SK-N-SH (cell line): ENCODE measurements at regions of chr20 and their contacts with region 1.

Region 1: DNA sequence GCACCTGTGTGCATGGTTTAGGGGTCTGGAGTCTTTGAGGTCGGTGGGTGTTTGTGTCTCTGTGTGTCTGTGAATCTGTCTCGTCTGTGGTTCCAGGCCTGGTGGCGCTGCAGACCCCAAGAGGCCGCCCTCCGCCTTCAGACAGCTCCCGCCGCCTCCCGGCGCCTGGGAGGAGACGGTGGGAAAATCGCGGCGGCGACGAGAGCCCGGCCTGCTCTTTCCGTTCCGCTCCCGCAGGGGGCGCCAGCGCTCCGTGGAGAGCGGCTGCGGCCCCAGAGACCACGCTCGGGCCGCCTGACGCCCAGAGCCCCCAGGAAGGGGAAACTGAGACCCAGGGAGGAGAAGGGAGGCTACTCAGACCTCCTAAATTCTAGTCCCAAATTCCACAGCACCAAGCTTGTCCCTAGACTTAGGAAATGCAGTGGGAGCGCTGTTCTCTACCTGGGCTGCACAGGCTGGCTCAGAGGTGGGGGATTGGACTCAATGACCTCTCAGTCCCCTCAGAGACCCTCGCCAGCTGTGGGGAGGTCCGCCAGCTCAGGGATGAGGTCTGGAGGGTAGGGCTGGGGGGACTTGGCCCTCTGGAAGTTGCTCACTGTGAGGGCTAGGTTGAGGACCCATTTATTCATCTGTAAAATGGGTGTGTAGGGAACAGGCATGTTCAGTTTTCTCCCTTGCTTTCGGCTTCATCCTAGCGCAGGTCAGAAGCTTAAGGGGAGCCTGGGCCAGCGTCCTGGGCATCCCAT is 36.9 kb upstream of the BLCAP start:
- DNase-seq: peak; percentile 90
- H3K4me3 ChIP-seq: peak overlapping the region in 1 of 2 experiments; percentile 29; a peak in 1 of 4 replicates
- H3K27ac ChIP-seq: no peak overlapping the region
- H3K4me1 ChIP-seq: peaks cover 0 to 3% of the 10 kb centered on the region in 2 experiments; a peak in 1 of 4 replicates
- H3K27me3 ChIP-seq: peaks cover 13% of the 10 kb centered on the region
- CTCF ChIP-seq: peak; percentile 91
- EP300 ChIP-seq: no peak
- RAD21 ChIP-seq: peak; percentile 95

Region 2: DNA sequence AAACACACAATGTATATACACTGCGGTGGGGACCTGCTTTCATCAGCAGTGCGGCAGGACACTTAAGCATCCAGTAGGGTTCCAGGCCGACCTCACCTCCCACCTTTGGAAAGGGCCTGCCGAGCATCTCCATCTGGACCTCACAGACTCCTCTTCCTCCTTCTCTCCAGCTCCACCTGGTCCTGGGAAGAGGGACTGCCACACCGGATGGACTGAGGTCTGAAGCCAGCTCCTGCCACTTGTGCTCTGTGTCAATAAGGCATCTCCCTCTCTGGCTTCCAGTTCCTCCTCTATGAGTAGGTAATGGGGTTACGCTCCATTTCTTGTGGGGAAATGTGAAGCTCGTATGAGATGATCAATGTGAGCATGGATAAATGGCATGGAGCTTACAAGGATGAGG is 62.6 kb before region 1 on chr20:
- CTCF ChIA-PET with region 1: no interaction called
- POLR2A ChIA-PET with region 1: no interaction called
- DNase-seq: no peak
- H3K4me3 ChIP-seq: no peak overlapping the region
- H3K27ac ChIP-seq: no peak overlapping the region
- H3K4me1 ChIP-seq: no peaks in the 10 kb centered on the region
- H3K27me3 ChIP-seq: no peaks in the 10 kb centered on the region
- CTCF ChIP-seq: no peak
- EP300 ChIP-seq: no peak
- RAD21 ChIP-seq: no peak

Region 3: GRCh38 chr20:37590938-37591490 is 26.5 kb after region 1 on chr20:
- CTCF ChIA-PET with region 1: interaction called, 23 read pairs
- POLR2A ChIA-PET with region 1: no interaction called
- DNase-seq: no peak
- H3K4me3 ChIP-seq: no peak overlapping the region
- H3K27ac ChIP-seq: no peak overlapping the region
- H3K4me1 ChIP-seq: peaks cover 0 to 10% of the 10 kb centered on the region in 2 experiments; a peak in 1 of 4 replicates
- H3K27me3 ChIP-seq: peaks cover 5% of the 10 kb centered on the region; the same call in 1 of the 2 replicates
- CTCF ChIP-seq: no peak
- EP300 ChIP-seq: no peak
- RAD21 ChIP-seq: no peak

Region 4: GRCh38 chr20:37651932-37652331 is 87.4 kb after region 1 on chr20:
- CTCF ChIA-PET with region 1: interaction called, 10 read pairs
- POLR2A ChIA-PET with region 1: no interaction called
- DNase-seq: peak; percentile 68
- H3K4me3 ChIP-seq: no peak overlapping the region
- H3K27ac ChIP-seq: no peak overlapping the region
- H3K4me1 ChIP-seq: peaks cover 0 to 5% of the 10 kb centered on the region in 2 experiments; a peak in 1 of 4 replicates
- H3K27me3 ChIP-seq: no peaks in the 10 kb centered on the region; the same call in 1 of the 2 replicates
- CTCF ChIP-seq: peak; percentile 54
- EP300 ChIP-seq: no peak
- RAD21 ChIP-seq: peak; percentile 83

Region 5: GRCh38 chr20:37822141-37822601 is 257.6 kb after region 1 on chr20:
- CTCF ChIA-PET with region 1: interaction called, 10 read pairs
- POLR2A ChIA-PET with region 1: no interaction called
- DNase-seq: no peak
- H3K4me3 ChIP-seq: peak overlapping the region; percentile 6 to 12; a peak in 2 of 4 replicates
- H3K27ac ChIP-seq: peak overlapping the region; percentile 79 to 89
- H3K4me1 ChIP-seq: peaks cover 9 to 13% of the 10 kb centered on the region in 2 experiments; a peak in 3 of 4 replicates
- H3K27me3 ChIP-seq: no peaks in the 10 kb centered on the region
- CTCF ChIP-seq: no peak
- EP300 ChIP-seq: no peak; a peak in 1 of 4 replicates
- RAD21 ChIP-seq: no peak

Region 6: GRCh38 chr20:37911838-37912281 is 347.3 kb after region 1 on chr20:
- CTCF ChIA-PET with region 1: interaction called, 22 read pairs
- POLR2A ChIA-PET with region 1: no interaction called
- DNase-seq: peak; percentile 80
- H3K4me3 ChIP-seq: no peak overlapping the region
- H3K27ac ChIP-seq: peak overlapping the region in 1 of 2 experiments; percentile 47; a peak in 1 of 4 replicates
- H3K4me1 ChIP-seq: peaks cover 21 to 45% of the 10 kb centered on the region in 2 experiments; a peak in 2 of 4 replicates
- H3K27me3 ChIP-seq: peaks cover 8% of the 10 kb centered on the region; the same call in 1 of the 2 replicates
- CTCF ChIP-seq: no peak
- EP300 ChIP-seq: peak in 1 of 2 experiments; percentile 57; a peak in 1 of 4 replicates
- RAD21 ChIP-seq: 0 out of 2 replicates have a peak, but pooled peaks have one; percentile 3

Region 7: DNA sequence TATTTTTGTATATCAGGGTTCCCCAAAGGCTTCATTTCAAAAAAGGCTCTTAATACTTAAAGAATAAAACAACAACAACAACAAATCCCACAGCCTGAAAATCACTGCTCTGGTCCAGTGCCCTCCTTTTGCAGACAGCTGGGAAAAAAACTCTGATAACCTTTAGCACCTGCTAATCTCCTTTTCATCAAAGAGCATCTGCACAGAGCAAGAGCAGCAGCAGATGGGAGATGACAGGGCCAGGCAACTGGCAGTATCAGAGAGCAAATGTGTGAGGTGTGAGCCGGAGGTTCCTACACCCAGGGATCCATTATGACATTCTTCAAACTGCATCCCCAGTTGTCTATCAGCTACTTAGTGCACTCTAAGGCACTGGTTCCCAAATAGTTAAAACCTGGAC is 443.0 kb after region 1 on chr20:
- CTCF ChIA-PET with region 1: interaction called, 20 read pairs
- POLR2A ChIA-PET with region 1: no interaction called
- DNase-seq: peak; percentile 55
- H3K4me3 ChIP-seq: no peak overlapping the region
- H3K27ac ChIP-seq: no peak overlapping the region
- H3K4me1 ChIP-seq: peaks cover 1 to 11% of the 10 kb centered on the region in 2 experiments; a peak in 2 of 4 replicates
- H3K27me3 ChIP-seq: no peaks in the 10 kb centered on the region
- CTCF ChIP-seq: no peak
- EP300 ChIP-seq: no peak; a peak in 1 of 4 replicates
- RAD21 ChIP-seq: no peak